ENCODE measurements at regions of chr12 and their contacts with region 1.

Region 1: DNA sequence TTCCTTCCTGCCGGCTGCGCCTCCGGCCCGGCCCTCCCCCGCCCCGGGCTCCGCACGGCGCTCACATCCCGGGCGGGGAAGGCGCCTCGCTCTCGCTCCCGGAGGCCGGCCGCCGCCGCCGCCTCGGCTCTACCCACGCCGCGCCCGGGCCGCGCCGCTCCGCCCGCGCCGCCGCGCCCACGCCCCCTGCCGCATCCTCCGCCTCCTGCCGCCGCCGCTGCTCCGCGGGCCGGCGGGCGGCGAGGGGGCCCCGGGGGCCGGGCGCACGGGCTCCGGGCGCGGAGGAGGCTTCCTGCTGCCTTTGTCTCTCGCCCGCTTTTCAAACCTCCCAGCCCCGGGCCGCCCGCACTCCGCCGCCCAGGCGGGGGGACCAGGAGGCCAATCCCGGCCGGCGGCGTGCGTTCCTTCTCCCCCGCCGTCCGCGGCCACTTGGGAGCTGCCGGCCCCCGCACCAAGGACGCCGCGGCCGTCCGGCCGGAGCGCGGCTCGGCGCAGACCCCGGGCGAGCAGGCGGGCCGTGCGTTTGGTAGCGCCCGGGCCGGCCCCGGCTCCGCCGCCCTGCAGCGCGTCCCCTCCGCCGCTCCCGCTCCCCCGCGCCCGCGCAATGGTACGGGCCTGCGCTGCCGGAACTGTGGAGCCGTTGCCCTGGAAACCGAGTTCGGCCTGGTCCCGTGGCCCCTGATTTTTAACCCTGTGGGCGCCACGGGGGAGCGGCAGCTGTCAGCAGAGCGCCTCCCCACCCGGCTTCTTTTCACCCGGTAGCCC is at the start of gene FBXL14:
- DNase-seq: peak; percentile 88
- H3K4me3 Mint-ChIP-seq: peak within 1 kb of the TSS; percentile 99
- H3K27ac Mint-ChIP-seq: peak within 1 kb of the TSS; percentile 94
- H3K4me1 Mint-ChIP-seq: peaks cover 48% of the 10 kb centered on the region
- H3K27me3 Mint-ChIP-seq: no peaks in the 10 kb centered on the region
- total RNA-seq, gene FBXL14: 19.4 and 20.4 TPM in 2 replicates

Region 2: DNA sequence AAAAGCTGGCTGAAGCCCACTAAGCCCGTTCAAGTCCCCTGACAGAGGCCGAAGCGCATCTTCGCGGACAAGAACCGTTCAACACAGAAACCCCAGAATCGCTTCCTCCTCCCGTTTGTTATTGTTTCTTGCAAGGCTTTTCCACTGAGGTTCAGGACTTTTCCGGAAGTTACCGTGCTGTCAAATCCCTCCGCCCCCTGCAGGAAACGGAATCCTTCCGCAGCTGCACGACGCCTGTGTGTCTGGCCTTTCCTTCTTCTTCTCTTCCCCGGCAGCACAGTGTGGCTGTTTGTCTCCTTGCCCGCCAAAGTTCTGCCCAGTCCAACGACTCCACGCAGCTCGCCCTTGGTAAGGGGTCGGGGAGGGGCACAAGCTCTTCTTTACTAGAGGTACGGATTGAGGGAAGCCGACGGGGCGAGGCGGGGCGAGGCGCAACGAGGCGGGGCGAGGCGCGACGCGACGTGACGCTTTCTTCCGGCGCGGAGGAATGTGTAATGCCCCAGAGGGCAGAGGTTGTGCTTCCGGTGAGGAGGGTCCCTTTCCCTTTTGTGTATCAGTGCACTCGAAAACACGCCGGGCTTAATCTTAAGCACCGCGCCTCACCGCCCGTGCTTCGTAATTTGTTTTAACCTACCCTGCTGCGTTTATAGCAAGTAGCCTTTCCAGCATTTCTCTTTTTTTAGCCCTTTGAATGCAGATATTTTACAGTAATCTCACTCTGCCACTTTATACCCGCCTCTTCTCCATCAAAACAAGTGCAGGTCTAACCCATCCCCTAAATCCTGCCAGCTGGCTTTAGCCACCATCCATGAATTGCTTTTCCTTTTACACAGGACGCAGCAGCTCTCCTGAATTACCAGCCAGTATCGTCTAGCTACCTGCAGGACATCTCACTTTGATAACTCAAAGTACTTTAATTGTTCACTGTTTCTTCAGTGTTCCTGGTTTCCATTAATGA is 1205.0 kb before region 1 on chr12 and contains the start of gene KDM5A:
- intact Hi-C with region 1: loop called (anchors 10 kb)
- DNase-seq: peak; percentile 82
- H3K4me3 Mint-ChIP-seq: peak within 1 kb of the TSS; percentile 94
- H3K27ac Mint-ChIP-seq: peak within 1 kb of the TSS; percentile 98
- H3K4me1 Mint-ChIP-seq: peaks cover 34% of the 10 kb centered on the region
- H3K27me3 Mint-ChIP-seq: no peaks in the 10 kb centered on the region
- total RNA-seq, gene KDM5A: 81.2 and 83.8 TPM in 2 replicates

Region 3: DNA sequence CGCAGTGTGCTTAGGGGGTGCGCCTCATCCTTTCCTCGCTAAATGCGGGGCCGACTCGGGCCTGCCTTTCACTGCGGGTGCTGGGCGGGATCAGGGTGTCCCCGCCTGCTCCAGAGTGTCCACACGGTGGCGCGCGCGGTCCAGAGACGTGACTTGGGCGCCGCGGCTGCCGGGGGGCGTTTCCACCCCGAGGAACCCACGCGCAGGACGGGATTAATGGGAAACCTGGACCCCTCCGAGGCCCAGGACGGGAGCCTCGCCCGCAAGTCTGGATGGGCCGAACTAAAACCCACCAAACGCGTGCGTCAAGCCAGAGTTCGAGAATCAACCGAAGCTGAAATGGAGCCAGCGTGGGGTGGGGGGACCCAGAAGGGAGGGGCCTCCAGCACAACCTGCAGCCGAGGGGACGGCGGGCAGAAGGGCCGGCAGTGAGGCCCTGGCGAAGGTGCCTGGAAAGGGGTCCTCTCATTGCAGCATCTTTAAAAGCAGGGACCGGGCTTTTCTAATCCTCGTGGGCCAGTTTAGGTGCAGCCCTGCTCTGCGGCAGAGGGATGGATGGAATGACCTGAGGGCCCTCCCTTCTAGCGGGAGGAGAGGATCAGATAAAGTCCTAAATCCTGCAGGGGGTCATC is 1024.5 kb before region 1 on chr12:
- intact Hi-C with region 1: loop called (anchors 5 kb)
- DNase-seq: peak; percentile 82
- H3K4me3 Mint-ChIP-seq: peak overlapping the region; percentile 79
- H3K27ac Mint-ChIP-seq: peak overlapping the region; percentile 36
- H3K4me1 Mint-ChIP-seq: peaks cover 44% of the 10 kb centered on the region
- H3K27me3 Mint-ChIP-seq: no peaks in the 10 kb centered on the region

Region 4: GRCh38 chr12:990661-991349 is 603.6 kb before region 1 on chr12 and contains the start of gene ERC1:
- intact Hi-C with region 1: loop called (anchors 2 kb)
- DNase-seq: peak; percentile 82
- H3K4me3 Mint-ChIP-seq: peak within 1 kb of the TSS; percentile 91
- H3K27ac Mint-ChIP-seq: peak within 1 kb of the TSS; percentile 88
- H3K4me1 Mint-ChIP-seq: peaks cover 35% of the 10 kb centered on the region
- H3K27me3 Mint-ChIP-seq: peaks cover 7% of the 10 kb centered on the region
- total RNA-seq, gene ERC1: 33.6 and 34.3 TPM in 2 replicates

Region 5: DNA sequence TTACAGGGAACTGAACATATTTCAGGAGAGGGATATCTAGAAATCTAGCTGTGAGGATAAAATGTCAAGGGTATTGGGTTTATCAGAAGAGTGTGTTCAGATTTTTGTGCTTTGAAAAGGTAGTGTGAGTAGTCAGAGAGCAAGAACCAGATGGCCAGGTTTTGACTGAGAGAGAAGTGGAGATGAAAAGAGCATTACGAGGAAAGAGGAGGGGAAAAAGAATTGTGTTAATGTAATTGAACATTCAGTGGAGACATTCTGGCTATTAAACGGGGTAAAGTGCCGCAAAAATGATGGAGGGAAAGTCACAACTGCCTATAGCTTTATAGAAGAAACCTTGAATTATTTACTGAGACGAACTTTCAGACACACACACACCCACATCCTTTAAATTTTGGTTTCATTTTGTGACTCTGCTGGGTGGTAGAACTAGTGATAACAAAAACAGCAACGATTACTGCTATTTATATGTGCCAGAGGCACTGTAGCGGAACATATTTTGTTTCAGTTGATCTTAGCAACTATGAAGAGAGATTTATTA is 389.8 kb before region 1 on chr12:
- intact Hi-C with region 1: loop called (anchors 5 kb)
- DNase-seq: peak; percentile 2
- H3K4me3 Mint-ChIP-seq: no peak overlapping the region
- H3K27ac Mint-ChIP-seq: no peak overlapping the region
- H3K4me1 Mint-ChIP-seq: peaks cover 7% of the 10 kb centered on the region
- H3K27me3 Mint-ChIP-seq: no peaks in the 10 kb centered on the region

Region 6: GRCh38 chr12:1605129-1606020 is 10.9 kb after region 1 on chr12:
- intact Hi-C with region 1: loop called (anchors 1 kb)
- DNase-seq: peak; percentile 48
- H3K4me3 Mint-ChIP-seq: peak overlapping the region; percentile 71
- H3K27ac Mint-ChIP-seq: peak overlapping the region; percentile 2
- H3K4me1 Mint-ChIP-seq: peaks cover 52% of the 10 kb centered on the region
- H3K27me3 Mint-ChIP-seq: no peaks in the 10 kb centered on the region

Region 7: GRCh38 chr12:1706633-1706981 is 112.2 kb after region 1 on chr12:
- intact Hi-C with region 1: no loop called
- DNase-seq: no peak
- H3K4me3 Mint-ChIP-seq: no peak overlapping the region
- H3K27ac Mint-ChIP-seq: no peak overlapping the region
- H3K4me1 Mint-ChIP-seq: peaks cover 49% of the 10 kb centered on the region
- H3K27me3 Mint-ChIP-seq: no peaks in the 10 kb centered on the region

Region 8: GRCh38 chr12:1795785-1796514 is 201.5 kb after region 1 on chr12:
- intact Hi-C with region 1: loop called (anchors 2 kb)
- DNase-seq: peak; percentile 93
- H3K4me3 Mint-ChIP-seq: peak overlapping the region; percentile 87
- H3K27ac Mint-ChIP-seq: peak overlapping the region; percentile 89
- H3K4me1 Mint-ChIP-seq: peaks cover 18% of the 10 kb centered on the region
- H3K27me3 Mint-ChIP-seq: no peaks in the 10 kb centered on the region

Measured in activated T-helper 1 cell treated with anti-CD3 and anti-CD28 coated beads, Interleukin-12 subunit alpha, Interleukin-12 subunit beta, Interleukin-2, Interleukin-4 antibody, amounts not matched to agents 30 ng/mL and 10 ng/mL and 1 ng/mL, durations not matched to agents 14 hours and 24 hours and 36 hours (primary cell).